Activated naive CD4-positive, alpha-beta T cell treated with anti-CD3 and anti-CD28 coated beads for 36 hours (primary cell): ENCODE measurements at regions of chr6 and their contacts with region 1.

Region 1: DNA sequence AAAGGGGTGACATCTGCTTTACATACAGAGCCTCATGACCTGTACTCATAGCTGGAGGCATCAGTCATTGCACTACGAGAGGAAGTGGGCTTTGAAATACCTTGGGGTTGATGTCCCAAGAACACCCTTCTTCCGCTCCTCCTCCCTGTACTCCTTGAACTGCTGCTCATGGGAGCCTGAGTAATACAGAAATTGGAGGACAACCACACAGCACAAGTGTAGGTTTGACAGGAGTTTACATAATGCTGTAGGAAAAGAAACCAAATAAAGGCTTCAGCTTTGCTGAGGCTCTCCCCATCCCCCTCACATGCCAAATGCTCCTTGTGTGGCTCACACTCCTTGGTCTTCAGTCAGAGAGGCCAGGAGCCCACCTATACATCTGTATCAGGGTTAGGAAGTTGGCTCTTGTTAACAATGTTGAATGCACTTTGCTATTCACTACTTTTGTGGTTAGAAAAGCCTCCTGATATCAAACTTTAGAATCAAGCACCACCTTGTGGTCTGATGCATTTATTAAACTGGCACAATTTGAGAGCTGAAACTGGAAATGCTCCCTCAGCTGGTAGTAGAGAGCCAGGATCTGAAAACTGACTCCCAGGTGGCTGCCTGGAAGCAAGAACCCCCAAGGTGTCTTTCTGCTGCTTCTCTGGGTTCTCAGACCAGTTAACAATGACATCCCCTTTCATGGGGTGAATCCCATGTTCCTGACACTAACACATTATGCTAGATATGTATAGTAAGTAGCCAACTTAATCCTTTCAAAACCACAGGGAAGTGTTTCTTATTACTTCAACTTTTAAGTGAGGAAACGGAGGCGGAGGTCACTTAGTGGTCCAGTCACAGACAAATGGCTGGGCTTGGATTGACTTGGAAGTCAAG is 56.2 kb upstream of the EDN1 start:
- DNase-seq: peak; percentile 53
- H3K4me3 Mint-ChIP-seq: no peak overlapping the region
- H3K27ac Mint-ChIP-seq: no peak overlapping the region
- H3K4me1 Mint-ChIP-seq: peaks cover 31% of the 10 kb centered on the region
- H3K27me3 Mint-ChIP-seq: no peaks in the 10 kb centered on the region

Region 2: GRCh38 chr6:11653028-11653583 is 580.8 kb before region 1 on chr6:
- CTCF ChIA-PET with region 1: interaction called, 24 read pairs
- intact Hi-C with region 1: loop called (anchors 1 kb)
- DNase-seq: peak; percentile 76
- H3K4me3 Mint-ChIP-seq: no peak overlapping the region
- H3K27ac Mint-ChIP-seq: no peak overlapping the region
- H3K4me1 Mint-ChIP-seq: peaks cover 12% of the 10 kb centered on the region
- H3K27me3 Mint-ChIP-seq: no peaks in the 10 kb centered on the region

Region 3: DNA sequence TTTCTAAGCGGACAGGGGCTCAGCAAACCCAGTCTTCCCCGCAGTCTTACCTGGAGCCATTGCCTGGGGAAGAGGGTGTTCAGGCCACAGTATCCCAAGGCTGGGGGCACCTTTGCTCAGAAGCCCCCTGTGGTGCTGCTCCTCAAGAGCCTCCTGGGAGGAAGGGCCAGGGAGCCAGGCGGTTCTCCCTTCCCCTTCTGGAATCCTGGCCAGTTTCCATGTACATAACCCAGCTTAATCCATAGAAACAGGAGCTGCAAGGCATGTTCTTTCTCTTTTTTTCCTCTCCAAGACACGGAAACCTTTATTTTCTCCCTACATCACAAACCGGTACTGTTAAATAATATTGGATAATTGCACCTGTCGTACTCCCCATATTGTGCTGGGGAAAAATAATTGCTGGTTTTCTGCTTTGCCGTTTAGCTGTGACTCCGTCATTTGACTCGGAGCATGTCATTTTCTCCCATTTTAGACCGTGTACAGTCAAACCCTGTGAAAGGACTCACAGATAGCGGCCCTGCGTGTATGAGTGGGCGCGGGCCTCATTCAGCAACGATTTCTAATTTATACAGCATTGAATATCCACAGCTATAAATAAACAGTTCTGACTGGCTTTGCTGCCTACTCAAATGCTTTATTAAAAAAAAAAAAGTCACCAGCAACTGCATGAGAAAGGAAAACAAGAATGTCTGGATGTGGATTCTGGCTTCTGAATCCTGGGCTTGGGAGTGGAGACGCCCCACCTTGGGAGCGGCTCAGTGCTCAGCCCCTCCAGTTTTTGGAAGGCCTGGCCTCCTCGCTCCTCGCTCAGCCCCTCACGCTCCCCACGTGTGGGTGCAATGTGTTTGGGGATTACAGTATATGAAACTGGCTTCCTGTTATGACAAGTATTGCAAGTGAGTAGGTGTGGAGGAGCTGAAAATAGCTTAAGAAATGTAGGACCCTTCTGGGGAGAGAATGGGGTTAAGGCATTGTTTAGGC is 522.6 kb before region 1 on chr6:
- CTCF ChIA-PET with region 1: no interaction called
- intact Hi-C with region 1: loop called (anchors 5 kb)
- DNase-seq: peak; percentile 79
- H3K4me3 Mint-ChIP-seq: peak overlapping the region; percentile 57
- H3K27ac Mint-ChIP-seq: peak overlapping the region; percentile 97
- H3K4me1 Mint-ChIP-seq: peaks cover 79% of the 10 kb centered on the region
- H3K27me3 Mint-ChIP-seq: no peaks in the 10 kb centered on the region

Region 4: DNA sequence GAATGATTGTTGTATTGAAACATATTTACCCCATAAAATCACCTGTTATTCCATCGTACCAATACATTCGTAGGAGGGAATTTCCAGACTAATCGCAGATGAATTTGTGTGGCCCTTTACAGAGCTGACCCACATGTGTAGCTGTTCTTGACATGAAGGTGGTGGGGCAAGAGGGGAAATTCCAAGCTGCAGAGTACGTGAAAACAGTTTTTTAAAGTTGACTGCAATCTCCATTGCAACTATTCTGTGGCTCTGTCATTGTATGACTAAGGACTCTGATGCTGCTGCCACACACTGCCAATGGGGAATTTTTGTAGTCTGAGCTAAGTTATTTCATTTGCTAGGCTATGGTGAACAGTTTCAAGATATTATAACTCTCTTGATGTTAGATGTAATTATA is 408.9 kb before region 1 on chr6:
- CTCF ChIA-PET with region 1: interaction called, 4 read pairs
- intact Hi-C with region 1: loop called (anchors 1 kb)
- DNase-seq: peak; percentile 55
- H3K4me3 Mint-ChIP-seq: no peak overlapping the region
- H3K27ac Mint-ChIP-seq: peak overlapping the region; percentile 65
- H3K4me1 Mint-ChIP-seq: peaks cover 11% of the 10 kb centered on the region
- H3K27me3 Mint-ChIP-seq: no peaks in the 10 kb centered on the region

Region 5: GRCh38 chr6:12011276-12012076 is 222.5 kb before region 1 on chr6:
- CTCF ChIA-PET with region 1: interaction called, 6 read pairs
- intact Hi-C with region 1: loop called (anchors 1 kb)
- DNase-seq: peak; percentile 98
- H3K4me3 Mint-ChIP-seq: peak overlapping the region; percentile 89
- H3K27ac Mint-ChIP-seq: peak overlapping the region; percentile 53
- H3K4me1 Mint-ChIP-seq: peaks cover 49% of the 10 kb centered on the region
- H3K27me3 Mint-ChIP-seq: no peaks in the 10 kb centered on the region

Region 6: GRCh38 chr6:12150812-12151432 is 83.0 kb before region 1 on chr6:
- CTCF ChIA-PET with region 1: no interaction called
- intact Hi-C with region 1: loop called (anchors 1 kb)
- DNase-seq: peak; percentile 55
- H3K4me3 Mint-ChIP-seq: no peak overlapping the region
- H3K27ac Mint-ChIP-seq: no peak overlapping the region
- H3K4me1 Mint-ChIP-seq: peaks cover 16% of the 10 kb centered on the region
- H3K27me3 Mint-ChIP-seq: no peaks in the 10 kb centered on the region

Region 7: GRCh38 chr6:12605888-12606345 is 372.0 kb after region 1 on chr6:
- CTCF ChIA-PET with region 1: no interaction called
- intact Hi-C with region 1: loop called (anchors 5 kb)
- DNase-seq: peak; percentile 67
- H3K4me3 Mint-ChIP-seq: no peak overlapping the region
- H3K27ac Mint-ChIP-seq: no peak overlapping the region
- H3K4me1 Mint-ChIP-seq: peaks cover 11% of the 10 kb centered on the region
- H3K27me3 Mint-ChIP-seq: peaks cover 24% of the 10 kb centered on the region